ENCODE measurements at regions of chr7 and their contacts with region 1.

Region 1: GRCh38 chr7:55018361-55019190 is at the start of gene EGFR:
- DNase-seq: peak; percentile 86
- H3K4me3 ChIP-seq: peak within 1 kb of the TSS; percentile 84 to 90 (median 88)
- H3K27ac ChIP-seq: peak within 1 kb of the TSS; percentile 96 to 97 (median 96)
- H3K4me1 ChIP-seq: peaks cover 0 to 16% (median 7%) of the 10 kb centered on the region in 4 donors
- H3K27me3 ChIP-seq: peaks cover 8% of the 10 kb centered on the region
- CTCF ChIP-seq: no peak
- EP300 ChIP-seq: no peak
- POLR2A ChIP-seq: peak; percentile 45
- total RNA-seq, gene EGFR: 40.0 to 85.7 (median 72.9) TPM

Region 2: DNA sequence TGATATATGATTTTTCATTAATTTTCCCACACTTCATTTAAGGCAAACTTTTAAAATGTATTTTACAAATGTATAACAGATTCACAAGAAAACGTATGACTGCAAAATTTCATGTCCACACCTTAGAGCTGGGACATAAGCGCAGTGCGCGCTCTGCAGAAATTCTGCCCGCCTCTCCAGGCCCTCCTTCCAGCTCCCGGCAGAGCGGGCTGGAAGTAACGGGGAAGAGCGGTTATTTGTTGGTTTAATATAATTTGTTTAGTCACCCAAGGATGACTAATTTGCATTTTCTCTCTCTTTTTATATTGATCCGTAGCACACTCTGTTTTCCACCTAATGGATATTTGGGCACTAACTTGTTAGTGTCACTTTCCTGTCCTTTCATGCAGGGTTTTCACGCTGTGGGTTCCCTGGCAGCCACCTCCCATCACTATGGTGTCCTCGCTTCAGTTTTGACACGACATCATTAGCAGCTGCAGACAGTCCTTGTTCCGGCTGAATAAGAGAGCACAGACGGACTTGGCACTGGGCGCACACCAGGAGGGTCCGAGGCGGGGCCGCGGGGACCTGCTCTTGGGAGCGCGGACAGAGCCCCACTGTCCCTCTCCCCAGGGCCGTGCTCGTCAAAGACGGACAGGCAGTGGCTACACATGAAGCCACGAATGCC is 130.4 kb before region 1 on chr7:
- in situ Hi-C with region 1: no loop called
- intact Hi-C with region 1: no loop called
- DNase-seq: no peak
- H3K4me3 ChIP-seq: peak overlapping the region in 2 of 4 donors; percentile 14 to 32
- H3K27ac ChIP-seq: no peak overlapping the region
- H3K4me1 ChIP-seq: peaks cover 0 to 4% (median 0%) of the 10 kb centered on the region in 4 donors
- H3K27me3 ChIP-seq: peaks cover 14% of the 10 kb centered on the region
- CTCF ChIP-seq: no peak
- EP300 ChIP-seq: no peak
- POLR2A ChIP-seq: no peak

Region 3: DNA sequence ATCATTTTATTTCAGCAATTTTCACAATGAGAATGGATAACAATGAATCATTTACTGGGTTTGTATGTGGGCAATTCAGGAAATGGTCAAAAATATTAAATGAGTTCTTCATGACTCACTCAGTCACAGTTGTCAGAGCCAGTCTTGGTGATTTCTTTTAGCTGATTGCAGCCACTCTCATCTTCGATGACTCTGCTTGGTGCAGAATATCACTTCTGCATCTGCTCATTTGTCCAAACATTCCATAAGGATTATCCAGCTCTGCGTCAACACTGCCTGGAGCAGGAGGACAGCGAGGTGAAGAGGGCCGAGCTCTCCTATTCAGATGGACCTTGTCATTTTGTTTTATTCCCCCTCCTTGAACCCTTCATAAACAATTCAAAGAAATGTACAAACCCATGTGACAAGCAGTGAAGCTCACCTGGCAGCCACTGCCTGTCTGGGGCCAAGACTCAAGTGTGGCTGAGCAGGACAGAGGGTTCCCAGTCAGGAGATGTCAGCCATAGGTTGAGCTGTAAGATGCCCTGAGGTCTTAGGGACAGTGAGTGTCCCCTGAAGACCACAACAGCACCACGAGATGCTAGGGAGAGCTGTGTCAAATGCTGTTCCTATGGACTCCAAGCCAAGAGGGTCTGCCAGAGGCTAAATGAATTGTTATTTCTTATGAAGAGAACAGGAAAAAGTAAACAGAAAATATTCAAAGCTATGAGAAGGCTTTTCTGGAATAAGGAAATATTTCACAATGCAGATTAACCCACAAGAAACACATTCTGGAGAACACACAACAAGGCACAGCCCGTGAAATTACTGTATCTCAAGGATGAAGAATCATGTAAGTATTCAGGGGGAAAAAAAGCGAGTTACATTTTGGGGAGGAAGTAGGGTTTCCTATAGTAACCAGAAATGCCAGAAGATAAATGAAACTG is 32.9 kb before region 1 on chr7:
- in situ Hi-C with region 1: no loop called
- intact Hi-C with region 1: no loop called
- DNase-seq: no peak
- H3K4me3 ChIP-seq: no peak overlapping the region
- H3K27ac ChIP-seq: no peak overlapping the region
- H3K4me1 ChIP-seq: peaks cover 0 to 8% (median 3%) of the 10 kb centered on the region in 4 donors
- H3K27me3 ChIP-seq: no peaks in the 10 kb centered on the region
- CTCF ChIP-seq: no peak
- EP300 ChIP-seq: no peak
- POLR2A ChIP-seq: no peak

Region 4: DNA sequence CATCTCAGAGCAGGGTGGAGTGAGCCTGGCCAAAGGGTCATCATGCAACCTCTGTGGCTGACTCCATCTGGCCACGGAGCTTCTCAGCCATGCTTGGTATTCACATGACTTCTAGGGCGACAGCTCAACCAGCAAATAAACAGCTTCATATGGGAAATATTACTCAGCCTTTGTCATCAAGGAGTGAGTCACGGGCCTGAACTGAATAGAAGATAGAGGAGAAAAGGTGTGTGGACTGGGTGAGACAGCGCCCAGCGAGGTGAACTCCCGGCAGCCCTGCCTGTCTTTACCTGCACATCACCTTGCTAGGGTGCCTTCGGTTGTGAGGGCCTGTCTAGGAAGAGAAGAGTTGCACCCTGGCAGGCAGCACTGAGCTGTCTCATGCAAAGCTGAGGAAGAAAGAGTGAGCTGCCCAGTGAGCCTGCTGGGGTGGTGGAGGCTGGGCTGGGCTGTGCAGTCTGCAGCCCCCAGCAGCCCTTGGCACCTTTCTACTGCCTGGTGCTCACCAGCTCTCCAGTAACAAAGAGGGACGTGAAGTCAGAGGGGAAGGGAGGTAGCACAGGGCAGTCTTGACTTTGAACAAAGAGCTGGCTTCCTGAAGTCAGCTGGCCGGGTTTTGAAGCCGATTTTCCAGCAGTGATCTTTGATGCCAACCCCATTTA is 114.4 kb after region 1 on chr7:
- in situ Hi-C with region 1: no loop called
- intact Hi-C with region 1: loop called (anchors 10 kb)
- DNase-seq: peak; percentile 56
- H3K4me3 ChIP-seq: no peak overlapping the region
- H3K27ac ChIP-seq: peak overlapping the region; percentile 71 to 85 (median 80)
- H3K4me1 ChIP-seq: peaks cover 41 to 50% (median 48%) of the 10 kb centered on the region in 4 donors
- H3K27me3 ChIP-seq: no peaks in the 10 kb centered on the region
- CTCF ChIP-seq: no peak
- EP300 ChIP-seq: peak; percentile 28
- POLR2A ChIP-seq: no peak

Region 5: GRCh38 chr7:56033671-56034432 is 1015.3 kb after region 1 on chr7:
- in situ Hi-C with region 1: loop called in 1 of 4 experiments (anchors 25 kb)
- intact Hi-C with region 1: no loop called
- DNase-seq: peak; percentile 70
- H3K4me3 ChIP-seq: peak overlapping the region; percentile 39 to 75 (median 70)
- H3K27ac ChIP-seq: peak overlapping the region; percentile 73 to 86 (median 80)
- H3K4me1 ChIP-seq: peaks cover 0 to 14% (median 8%) of the 10 kb centered on the region in 4 donors
- H3K27me3 ChIP-seq: no peaks in the 10 kb centered on the region
- CTCF ChIP-seq: peak in 4 of 5 experiments; percentile 27 to 42 (median 35)
- EP300 ChIP-seq: no peak
- POLR2A ChIP-seq: no peak